ENCODE measurements at regions of chrX and their contacts with region 1.

Region 1: DNA sequence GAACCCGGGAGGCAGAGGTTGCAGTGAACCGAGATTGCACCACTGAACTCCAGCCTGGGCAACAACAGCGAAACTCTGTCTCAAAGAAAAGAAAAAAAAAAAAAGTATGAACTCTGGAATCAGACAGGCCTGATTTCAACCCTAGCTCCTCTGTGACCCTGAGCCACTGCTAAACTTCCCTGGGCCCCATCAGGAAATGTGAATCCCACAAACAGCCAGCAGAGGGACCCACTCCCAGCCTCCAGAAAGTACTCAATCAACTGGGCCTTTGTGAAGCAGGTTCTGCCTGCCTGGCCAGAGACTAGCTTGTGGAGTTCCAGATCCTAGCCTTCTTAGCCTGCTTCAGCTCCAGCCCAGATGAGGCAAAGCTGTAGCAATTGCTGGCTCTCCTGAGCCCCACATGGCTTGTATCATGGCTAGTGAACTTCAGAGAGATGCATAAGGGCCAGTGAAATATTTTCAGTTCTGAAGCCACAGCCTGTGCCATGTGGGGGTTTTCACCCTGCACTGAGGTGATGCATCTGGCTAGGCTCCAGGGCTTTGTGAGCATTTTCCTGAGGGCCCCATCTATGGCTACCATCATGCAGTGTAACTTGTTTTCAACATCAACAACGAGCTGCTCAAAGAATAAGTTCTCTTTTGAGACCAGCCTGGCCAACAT is 7.2 kb upstream of the IDS start:
- DNase-seq: no peak
- H3K4me3 ChIP-seq: no peak overlapping the region
- H3K27ac ChIP-seq: no peak overlapping the region
- H3K27me3 ChIP-seq: peaks cover 5% of the 10 kb centered on the region
- CTCF ChIP-seq: peak; percentile 65

Region 2: GRCh38 chrX:149097786-149098185 is 414.6 kb before region 1 on chrX:
- CTCF ChIA-PET with region 1: no interaction called
- POLR2A ChIA-PET with region 1: no interaction called
- DNase-seq: no peak
- H3K4me3 ChIP-seq: no peak overlapping the region
- H3K27ac ChIP-seq: no peak overlapping the region
- H3K27me3 ChIP-seq: no peaks in the 10 kb centered on the region
- CTCF ChIP-seq: no peak

Region 3: GRCh38 chrX:149522916-149523315 is 10.6 kb after region 1 on chrX:
- CTCF ChIA-PET with region 1: interaction called, 22 read pairs
- POLR2A ChIA-PET with region 1: no interaction called
- DNase-seq: no peak
- H3K4me3 ChIP-seq: no peak overlapping the region
- H3K27ac ChIP-seq: no peak overlapping the region
- H3K27me3 ChIP-seq: no peaks in the 10 kb centered on the region
- CTCF ChIP-seq: no peak

Measured in AG04450 (cell line).